GM18951 (cell line): ENCODE measurements at regions of chr3 and their contacts with region 1.

Region 1: GRCh38 chr3:172591876-172592771 is 68.9 kb upstream of the TNFSF10 start:
- POLR2A ChIP-seq: peak; percentile 37

Region 2: GRCh38 chr3:172501560-172501959 is 90.6 kb before region 1 on chr3:
- in situ Hi-C with region 1: loop called (anchors 5 kb)
- POLR2A ChIP-seq: no peak

Region 3: GRCh38 chr3:172546628-172547214 is 45.4 kb before region 1 on chr3:
- in situ Hi-C with region 1: no loop called
- POLR2A ChIP-seq: no peak